ENCODE measurements at regions of chr15 and their contacts with region 1.

Region 1: GRCh38 chr15:75453703-75454470 is 2.4 kb upstream of the SIN3A start:
- DNase-seq: peak; percentile 98 to 100 (median 99)
- H3K4me3 ChIP-seq: peak overlapping the region; percentile 70 to 86
- H3K4me3 Mint-ChIP-seq: peak overlapping the region; percentile 90 to 99 (median 97)
- H3K27ac ChIP-seq: peak overlapping the region; percentile 98
- H3K27ac Mint-ChIP-seq: peak overlapping the region; percentile 98 to 100 (median 99)
- H3K4me1 ChIP-seq: peaks cover 36% of the 10 kb centered on the region
- H3K4me1 Mint-ChIP-seq: peaks cover 26 to 55% (median 33%) of the 10 kb centered on the region in 4 donors
- H3K27me3 ChIP-seq: no peaks in the 10 kb centered on the region
- H3K27me3 Mint-ChIP-seq: peaks cover 0 to 2% of the 10 kb centered on the region in 2 donors

Region 2: DNA sequence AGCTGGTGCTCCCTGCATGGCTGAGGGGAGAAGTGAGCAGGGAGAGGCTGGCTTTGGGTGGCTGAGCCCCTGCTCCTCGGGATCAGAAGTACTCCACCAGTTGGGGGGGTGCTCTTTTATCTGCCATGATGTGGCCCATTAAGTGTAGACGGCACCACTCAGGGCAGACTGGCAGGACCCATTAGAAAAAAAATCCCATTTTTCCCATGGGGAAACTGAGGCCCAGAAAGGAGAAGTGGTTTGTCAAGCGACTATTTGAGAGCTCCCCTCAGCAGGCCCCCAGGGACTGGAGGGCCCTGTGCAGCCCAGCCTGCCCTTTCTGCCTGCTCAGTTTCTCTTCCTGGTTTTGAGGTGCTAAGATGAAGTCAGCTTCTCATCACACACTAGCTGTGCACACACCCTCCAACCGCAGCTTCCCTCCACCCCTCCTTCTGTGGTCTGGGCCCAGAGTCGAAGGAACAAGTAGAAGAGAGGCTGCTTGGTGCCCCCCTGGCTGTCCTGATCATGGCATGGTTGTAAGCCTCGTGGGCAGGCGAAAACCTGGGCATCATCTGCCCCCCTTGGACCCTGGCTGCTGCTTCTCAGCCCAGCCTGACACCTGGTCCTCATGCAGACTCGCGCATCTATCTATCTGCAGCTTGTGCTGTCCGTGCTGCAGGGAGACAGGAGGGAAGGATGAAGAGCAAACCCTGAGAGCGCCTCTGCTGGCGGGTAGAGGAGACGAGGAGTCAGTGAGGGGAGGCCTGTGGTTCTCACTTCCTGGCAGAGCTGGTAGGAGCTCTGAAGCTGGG is 666.4 kb before region 1 on chr15:
- CTCF ChIA-PET with region 1: no interaction called
- POLR2A ChIA-PET with region 1: interaction called, 13 read pairs
- intact Hi-C with region 1: no loop called
- DNase-seq: peak; percentile 94 to 99 (median 96)
- H3K4me3 ChIP-seq: peak overlapping the region; percentile 55 to 69
- H3K4me3 Mint-ChIP-seq: peak overlapping the region; percentile 85 to 96 (median 92)
- H3K27ac ChIP-seq: peak overlapping the region; percentile 86
- H3K27ac Mint-ChIP-seq: peak overlapping the region; percentile 95 to 99 (median 98)
- H3K4me1 ChIP-seq: peaks cover 89% of the 10 kb centered on the region
- H3K4me1 Mint-ChIP-seq: peaks cover 39 to 97% (median 66%) of the 10 kb centered on the region in 4 donors
- H3K27me3 ChIP-seq: no peaks in the 10 kb centered on the region
- H3K27me3 Mint-ChIP-seq: no peaks in the 10 kb centered on the region

Region 3: DNA sequence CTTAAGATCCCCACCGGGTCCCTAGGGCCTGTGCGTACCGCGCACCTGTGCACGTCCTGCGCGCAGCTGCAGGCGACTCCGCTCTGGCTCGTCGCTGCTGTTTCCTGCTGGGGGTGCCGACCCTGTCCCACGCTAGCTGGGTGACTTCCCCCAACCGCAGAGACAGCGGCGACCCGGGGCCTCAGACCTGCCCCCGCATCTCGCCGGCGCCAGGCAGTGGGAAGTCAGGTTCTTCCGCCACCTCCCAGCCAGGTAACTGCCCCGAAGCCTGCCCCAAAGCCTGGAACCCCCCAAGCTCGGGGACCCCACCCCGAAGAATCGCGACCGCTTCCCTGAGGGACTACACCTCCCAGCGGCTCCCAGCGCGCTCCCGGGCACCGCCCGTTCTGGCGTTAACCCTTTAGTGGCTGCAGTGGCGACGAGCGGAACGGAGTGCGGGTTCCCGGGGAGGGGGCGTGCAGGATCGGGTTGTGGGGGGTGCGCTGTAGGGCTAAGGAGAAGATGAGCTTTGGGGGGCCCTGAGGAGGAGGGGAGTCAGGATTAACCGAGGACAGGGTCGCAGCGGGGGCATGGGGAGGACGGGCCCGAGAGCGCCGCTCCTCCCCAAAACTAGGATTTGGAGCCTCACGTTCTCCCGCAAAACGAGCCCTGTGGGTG is 106.5 kb before region 1 on chr15:
- CTCF ChIA-PET with region 1: no interaction called
- POLR2A ChIA-PET with region 1: interaction called, 22 read pairs
- intact Hi-C with region 1: loop called (anchors 5 kb)
- DNase-seq: peak; percentile 66 to 75 (median 70)
- H3K4me3 ChIP-seq: peak overlapping the region; percentile 30 to 72
- H3K4me3 Mint-ChIP-seq: peak overlapping the region; percentile 75 to 93 (median 86)
- H3K27ac ChIP-seq: peak overlapping the region; percentile 58
- H3K27ac Mint-ChIP-seq: peak overlapping the region; percentile 84 to 94 (median 86)
- H3K4me1 ChIP-seq: peaks cover 36% of the 10 kb centered on the region
- H3K4me1 Mint-ChIP-seq: peaks cover 14 to 38% (median 26%) of the 10 kb centered on the region in 4 donors
- H3K27me3 ChIP-seq: no peaks in the 10 kb centered on the region
- H3K27me3 Mint-ChIP-seq: no peaks in the 10 kb centered on the region

Region 4: DNA sequence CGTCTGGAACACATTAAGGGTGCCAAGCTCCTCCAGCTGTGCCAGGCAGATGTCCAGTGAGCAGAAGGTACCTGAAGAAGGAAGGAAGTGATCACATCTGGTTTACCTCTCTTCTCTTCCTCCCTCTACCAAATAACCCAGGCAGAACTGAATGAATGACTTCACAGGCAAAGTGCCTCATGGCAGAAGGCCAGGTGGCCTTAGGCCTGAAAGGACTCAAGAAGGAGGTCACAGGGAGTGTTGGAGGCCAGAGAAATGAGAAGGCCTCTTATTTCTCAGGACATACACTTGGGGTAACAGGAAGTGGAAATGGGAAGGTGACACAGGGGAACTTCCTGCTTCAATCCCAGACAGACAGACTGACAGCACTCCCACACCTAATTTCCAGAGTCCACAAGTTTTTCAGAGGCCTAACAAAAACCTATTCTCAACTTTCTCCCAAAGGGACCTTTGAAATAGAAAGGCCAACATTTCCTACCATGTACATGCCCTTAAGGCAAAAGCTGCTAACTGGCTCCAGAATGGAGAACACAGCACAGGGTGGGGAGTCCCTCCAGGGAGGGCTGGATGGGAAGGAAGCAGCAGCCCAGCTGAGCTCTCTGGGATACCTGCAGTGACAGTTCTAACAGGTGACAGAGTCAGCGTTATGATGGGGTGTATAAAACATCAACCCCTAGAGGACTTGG is 15.2 kb after region 1 on chr15:
- CTCF ChIA-PET with region 1: interaction called, 3 read pairs
- POLR2A ChIA-PET with region 1: interaction called, 32 read pairs
- intact Hi-C with region 1: no loop called
- DNase-seq: no peak
- H3K4me3 ChIP-seq: no peak overlapping the region
- H3K4me3 Mint-ChIP-seq: no peak overlapping the region
- H3K27ac ChIP-seq: no peak overlapping the region
- H3K27ac Mint-ChIP-seq: no peak overlapping the region
- H3K4me1 ChIP-seq: no peaks in the 10 kb centered on the region
- H3K4me1 Mint-ChIP-seq: peaks cover 0 to 1% (median 0%) of the 10 kb centered on the region in 4 donors
- H3K27me3 ChIP-seq: no peaks in the 10 kb centered on the region
- H3K27me3 Mint-ChIP-seq: no peaks in the 10 kb centered on the region

Region 5: GRCh38 chr15:75639709-75640482 is 186.0 kb after region 1 on chr15 and contains the start of gene IMP3:
- CTCF ChIA-PET with region 1: interaction called, 18 read pairs
- POLR2A ChIA-PET with region 1: interaction called, 181 read pairs
- intact Hi-C with region 1: loop called (anchors 1 kb)
- DNase-seq: peak; percentile 92 to 96 (median 94)
- H3K4me3 ChIP-seq: peak within 1 kb of the TSS; percentile 77 to 96
- H3K4me3 Mint-ChIP-seq: peak within 1 kb of the TSS; percentile 87 to 98 (median 94)
- H3K27ac ChIP-seq: peak within 1 kb of the TSS; percentile 81
- H3K27ac Mint-ChIP-seq: peak within 1 kb of the TSS; percentile 79 to 98 (median 96)
- H3K4me1 ChIP-seq: peaks cover 40% of the 10 kb centered on the region
- H3K4me1 Mint-ChIP-seq: peaks cover 30 to 61% (median 39%) of the 10 kb centered on the region in 4 donors
- H3K27me3 ChIP-seq: no peaks in the 10 kb centered on the region
- H3K27me3 Mint-ChIP-seq: no peaks in the 10 kb centered on the region
- total RNA-seq, gene IMP3: 85.5 to 96.9 TPM

Region 6: GRCh38 chr15:75861750-75862402 is 408.0 kb after region 1 on chr15:
- CTCF ChIA-PET with region 1: no interaction called
- POLR2A ChIA-PET with region 1: no interaction called
- intact Hi-C with region 1: no loop called
- DNase-seq: no peak
- H3K4me3 ChIP-seq: no peak overlapping the region
- H3K4me3 Mint-ChIP-seq: no peak overlapping the region
- H3K27ac ChIP-seq: no peak overlapping the region
- H3K27ac Mint-ChIP-seq: peak overlapping the region in 3 of 7 donors; percentile 7 to 59 (median 29)
- H3K4me1 ChIP-seq: peaks cover 10% of the 10 kb centered on the region
- H3K4me1 Mint-ChIP-seq: peaks cover 32 to 70% (median 48%) of the 10 kb centered on the region in 4 donors
- H3K27me3 ChIP-seq: no peaks in the 10 kb centered on the region
- H3K27me3 Mint-ChIP-seq: no peaks in the 10 kb centered on the region

Measured in CD4-positive, alpha-beta memory T cell (primary cell).